H1 (cell line): ENCODE measurements at regions of chr10 and their contacts with region 1.

Region 1: DNA sequence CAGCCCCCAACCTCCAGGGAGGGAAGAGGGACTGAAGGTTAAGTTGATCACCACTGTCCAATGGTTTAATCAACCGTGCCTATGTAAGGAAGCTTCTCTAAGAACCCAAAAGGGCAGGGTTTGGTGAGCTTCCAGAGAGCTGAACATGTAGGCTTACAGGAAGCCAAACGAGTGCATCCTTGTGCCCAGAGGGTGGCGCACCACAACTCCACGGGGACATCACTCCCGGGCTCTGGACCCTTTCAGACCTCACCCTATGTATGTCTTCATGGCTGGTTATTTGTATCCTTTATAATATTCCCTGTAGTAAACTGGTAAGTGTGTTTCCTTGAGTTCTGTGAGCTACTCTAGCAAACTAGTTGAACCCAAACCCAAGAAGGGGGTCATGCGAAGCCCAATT is 11.5 kb upstream of the NFKB2 start:
- DNase-seq: peak in 1 of 2 experiments; percentile 63
- H3K4me3 ChIP-seq: no peak overlapping the region
- H3K27ac ChIP-seq: no peak overlapping the region
- H3K4me1 ChIP-seq: 0 out of 7 replicates have a peak, but pooled peaks cover 0 to 2% (median 0%) of the 10 kb centered on the region in 4 experiments
- H3K27me3 ChIP-seq: no peaks in the 10 kb centered on the region
- CTCF ChIP-seq: peak; percentile 83 to 87 (median 84)
- EP300 ChIP-seq: no peak
- POLR2A ChIP-seq: no peak
- RAD21 ChIP-seq: peak; percentile 66 to 72

Region 2: GRCh38 chr10:102064868-102065560 is 319.0 kb before region 1 on chr10 and contains the start of gene HPS6:
- CTCF ChIA-PET with region 1: no interaction called
- POLR2A ChIA-PET with region 1: no interaction called
- DNase-seq: peak in 1 of 2 experiments; percentile 85
- H3K4me3 ChIP-seq: peak within 1 kb of the TSS; percentile 71 to 86 (median 77)
- H3K27ac ChIP-seq: no peak within 1 kb of the TSS
- H3K4me1 ChIP-seq: peaks cover 0 to 5% (median 4%) of the 10 kb centered on the region in 4 experiments; a peak in 5 of 7 replicates
- H3K27me3 ChIP-seq: peaks cover 0 to 3% (median 1%) of the 10 kb centered on the region in 4 experiments; a peak in 1 of 7 replicates
- CTCF ChIP-seq: no peak
- EP300 ChIP-seq: no peak
- POLR2A ChIP-seq: peak in 1 of 2 experiments; percentile 51; a peak in 1 of 3 replicates
- RAD21 ChIP-seq: no peak
- total RNA-seq, gene HPS6: 16.2 and 17.7 TPM in 2 replicates

Region 3: GRCh38 chr10:102167861-102168260 is 216.2 kb before region 1 on chr10:
- CTCF ChIA-PET with region 1: interaction called, 24 read pairs
- POLR2A ChIA-PET with region 1: no interaction called
- DNase-seq: no peak
- H3K4me3 ChIP-seq: no peak overlapping the region
- H3K27ac ChIP-seq: no peak overlapping the region
- H3K4me1 ChIP-seq: peaks cover 0 to 4% (median 0%) of the 10 kb centered on the region in 4 experiments; a peak in 2 of 7 replicates
- H3K27me3 ChIP-seq: no peaks in the 10 kb centered on the region
- CTCF ChIP-seq: no peak
- EP300 ChIP-seq: no peak
- POLR2A ChIP-seq: no peak
- RAD21 ChIP-seq: no peak

Region 4: GRCh38 chr10:102358712-102359382 is 25.2 kb before region 1 on chr10:
- CTCF ChIA-PET with region 1: interaction called, 65 read pairs
- POLR2A ChIA-PET with region 1: interaction called, 3 read pairs
- DNase-seq: no peak
- H3K4me3 ChIP-seq: no peak overlapping the region
- H3K27ac ChIP-seq: no peak overlapping the region
- H3K4me1 ChIP-seq: no peaks in the 10 kb centered on the region
- H3K27me3 ChIP-seq: no peaks in the 10 kb centered on the region
- CTCF ChIP-seq: no peak
- EP300 ChIP-seq: no peak
- POLR2A ChIP-seq: no peak
- RAD21 ChIP-seq: no peak

Region 5: GRCh38 chr10:102368072-102368471 is 16.0 kb before region 1 on chr10:
- CTCF ChIA-PET with region 1: interaction called, 58 read pairs
- POLR2A ChIA-PET with region 1: interaction called, 3 read pairs
- DNase-seq: no peak
- H3K4me3 ChIP-seq: no peak overlapping the region
- H3K27ac ChIP-seq: no peak overlapping the region
- H3K4me1 ChIP-seq: no peaks in the 10 kb centered on the region
- H3K27me3 ChIP-seq: no peaks in the 10 kb centered on the region
- CTCF ChIP-seq: no peak
- EP300 ChIP-seq: no peak
- POLR2A ChIP-seq: no peak
- RAD21 ChIP-seq: no peak

Region 6: GRCh38 chr10:102394079-102394800 is 10.2 kb after region 1 on chr10:
- CTCF ChIA-PET with region 1: interaction called, 357 read pairs
- POLR2A ChIA-PET with region 1: interaction called, 3 read pairs
- DNase-seq: peak; percentile 65 to 96
- H3K4me3 ChIP-seq: peak overlapping the region; percentile 29 to 69 (median 55)
- H3K27ac ChIP-seq: peak overlapping the region; percentile 69; the same call in 1 of the 2 replicates
- H3K4me1 ChIP-seq: peaks cover 0 to 17% (median 9%) of the 10 kb centered on the region in 4 experiments; a peak in 6 of 7 replicates
- H3K27me3 ChIP-seq: peaks cover 0 to 22% (median 20%) of the 10 kb centered on the region in 4 experiments; a peak in 6 of 7 replicates
- CTCF ChIP-seq: peak in 1 of 3 experiments; percentile 96; a peak in 2 of 4 replicates
- EP300 ChIP-seq: peak in 1 of 2 experiments; percentile 89; a peak in 1 of 3 replicates
- POLR2A ChIP-seq: no peak; a peak in 1 of 3 replicates
- RAD21 ChIP-seq: peak; percentile 69 to 81

Region 7: GRCh38 chr10:102408728-102409603 is 24.9 kb after region 1 on chr10:
- CTCF ChIA-PET with region 1: interaction called, 357 read pairs
- POLR2A ChIA-PET with region 1: interaction called, 9 read pairs
- DNase-seq: peak in 1 of 2 experiments; percentile 67
- H3K4me3 ChIP-seq: peak overlapping the region; percentile 55 to 70 (median 57)
- H3K27ac ChIP-seq: no peak overlapping the region
- H3K4me1 ChIP-seq: peaks cover 9 to 31% (median 22%) of the 10 kb centered on the region in 4 experiments
- H3K27me3 ChIP-seq: peaks cover 17 to 52% (median 50%) of the 10 kb centered on the region in 4 experiments
- CTCF ChIP-seq: peak in 1 of 3 experiments; percentile 6; a peak in 1 of 4 replicates
- EP300 ChIP-seq: no peak; a peak in 1 of 3 replicates
- POLR2A ChIP-seq: no peak
- RAD21 ChIP-seq: no peak; a peak in 1 of 4 replicates

Region 8: DNA sequence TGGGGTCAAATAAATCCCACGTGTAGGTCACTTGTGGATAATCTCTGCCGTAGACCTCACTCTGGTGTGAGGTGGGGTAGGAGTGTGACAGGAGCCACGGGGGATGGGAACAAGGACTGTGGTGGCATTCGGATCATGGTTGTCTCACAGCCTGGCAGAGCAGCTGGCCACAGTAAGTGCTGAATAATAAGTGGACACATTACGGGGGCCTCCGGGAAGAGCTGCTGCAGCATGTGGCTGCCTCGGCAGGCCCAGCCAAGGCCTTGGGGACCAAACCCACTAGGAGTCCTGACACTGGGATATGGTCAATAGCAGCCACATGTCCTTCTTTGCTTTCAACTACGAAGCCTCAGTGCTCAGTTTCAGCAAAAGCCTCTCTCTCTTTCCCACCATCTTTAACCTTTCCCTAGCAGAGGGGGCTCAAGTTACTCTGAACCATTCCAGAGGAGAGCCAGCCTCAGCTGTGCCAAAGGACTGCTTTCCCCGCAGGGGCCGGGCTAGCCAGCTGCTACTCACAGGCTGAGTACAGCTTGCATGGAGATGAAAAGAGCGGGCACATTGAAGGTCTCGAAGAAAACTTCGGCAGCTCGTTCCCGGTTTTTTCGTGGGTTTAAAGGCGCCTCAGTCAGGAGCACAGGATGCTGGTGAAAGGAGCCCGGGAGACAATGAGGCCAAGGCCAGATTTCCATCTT is 101.2 kb after region 1 on chr10:
- CTCF ChIA-PET with region 1: interaction called, 77 read pairs
- POLR2A ChIA-PET with region 1: no interaction called
- DNase-seq: no peak
- H3K4me3 ChIP-seq: no peak overlapping the region
- H3K27ac ChIP-seq: no peak overlapping the region
- H3K4me1 ChIP-seq: no peaks in the 10 kb centered on the region
- H3K27me3 ChIP-seq: no peaks in the 10 kb centered on the region
- CTCF ChIP-seq: no peak
- EP300 ChIP-seq: no peak
- POLR2A ChIP-seq: no peak
- RAD21 ChIP-seq: no peak